Transverse colon (tissue), 4 donors: ENCODE measurements at regions of chr15 and their contacts with region 1.

Region 1: DNA sequence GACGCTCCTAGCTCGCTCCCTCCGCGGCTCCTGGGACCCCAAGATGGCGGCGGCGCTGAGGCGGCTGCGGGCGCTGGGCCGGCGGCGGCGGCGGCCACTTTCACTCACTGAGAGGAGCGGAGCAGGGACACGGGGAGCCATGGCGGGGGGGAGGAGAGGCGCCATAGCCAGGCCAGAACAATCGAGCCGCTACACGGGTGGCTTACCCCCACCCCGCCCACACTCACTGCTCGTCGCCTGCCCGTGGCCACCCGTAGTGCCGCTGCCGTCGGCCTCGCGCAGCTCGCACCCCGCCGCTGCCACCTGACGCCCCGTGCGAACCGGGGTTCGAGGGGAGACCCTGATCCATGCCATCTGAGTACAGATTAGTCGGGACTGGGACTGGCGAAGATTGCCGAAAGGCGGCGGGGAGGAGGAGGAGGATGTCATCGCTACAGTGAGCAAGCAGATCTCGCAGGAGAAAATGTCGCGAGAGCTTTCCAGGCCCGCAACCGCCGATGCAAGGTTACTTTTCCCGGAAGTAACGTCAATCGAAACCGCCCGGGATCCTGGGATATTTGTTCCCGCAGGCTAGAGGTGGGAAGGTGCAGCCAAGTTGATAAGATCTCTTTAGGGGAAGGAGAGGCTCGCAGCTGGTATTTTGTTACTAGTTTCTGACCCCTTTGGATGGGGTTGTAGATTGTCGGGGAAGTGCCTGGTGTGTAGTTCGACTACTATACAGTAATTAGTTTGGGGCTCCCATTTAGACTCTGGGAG is at the start of gene INO80:
- DNase-seq: peak; percentile 99
- H3K4me3 ChIP-seq: peak within 1 kb of the TSS; percentile 69 to 89 (median 89)
- H3K27ac ChIP-seq: peak within 1 kb of the TSS; percentile 96 to 99 (median 98)
- H3K4me1 ChIP-seq: peaks cover 4 to 19% (median 8%) of the 10 kb centered on the region in 4 donors
- H3K27me3 ChIP-seq: no peaks in the 10 kb centered on the region
- CTCF ChIP-seq: peak in 2 of 5 experiments; percentile 17 to 24
- EP300 ChIP-seq: no peak
- POLR2A ChIP-seq: peak; percentile 91
- total RNA-seq, gene INO80: 21.8 to 69.1 (median 29.8) TPM

Region 2: DNA sequence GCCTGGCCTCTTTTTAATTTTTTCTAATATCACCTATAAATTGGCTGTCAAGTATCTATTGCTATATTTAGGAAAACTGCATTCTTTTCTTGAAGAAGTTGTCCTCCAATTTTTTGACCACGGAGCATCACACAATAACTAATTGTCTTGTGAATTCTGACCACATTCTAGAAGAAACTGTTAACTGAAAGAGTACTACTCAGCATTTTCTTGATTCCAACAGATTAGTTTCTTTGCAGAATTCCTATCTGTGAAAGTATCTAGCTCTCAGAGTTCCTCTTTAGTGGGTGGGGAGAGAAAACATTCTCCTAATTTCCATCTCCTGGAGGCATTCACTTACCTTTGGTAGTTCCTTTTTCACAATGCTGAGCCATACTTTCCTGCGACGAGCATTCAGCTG is 31.3 kb before region 1 on chr15:
- in situ Hi-C with region 1: no loop called
- intact Hi-C with region 1: no loop called
- DNase-seq: no peak
- H3K4me3 ChIP-seq: no peak overlapping the region
- H3K27ac ChIP-seq: no peak overlapping the region
- H3K4me1 ChIP-seq: no peaks in the 10 kb centered on the region
- H3K27me3 ChIP-seq: no peaks in the 10 kb centered on the region
- CTCF ChIP-seq: no peak
- EP300 ChIP-seq: no peak
- POLR2A ChIP-seq: no peak

Region 3: DNA sequence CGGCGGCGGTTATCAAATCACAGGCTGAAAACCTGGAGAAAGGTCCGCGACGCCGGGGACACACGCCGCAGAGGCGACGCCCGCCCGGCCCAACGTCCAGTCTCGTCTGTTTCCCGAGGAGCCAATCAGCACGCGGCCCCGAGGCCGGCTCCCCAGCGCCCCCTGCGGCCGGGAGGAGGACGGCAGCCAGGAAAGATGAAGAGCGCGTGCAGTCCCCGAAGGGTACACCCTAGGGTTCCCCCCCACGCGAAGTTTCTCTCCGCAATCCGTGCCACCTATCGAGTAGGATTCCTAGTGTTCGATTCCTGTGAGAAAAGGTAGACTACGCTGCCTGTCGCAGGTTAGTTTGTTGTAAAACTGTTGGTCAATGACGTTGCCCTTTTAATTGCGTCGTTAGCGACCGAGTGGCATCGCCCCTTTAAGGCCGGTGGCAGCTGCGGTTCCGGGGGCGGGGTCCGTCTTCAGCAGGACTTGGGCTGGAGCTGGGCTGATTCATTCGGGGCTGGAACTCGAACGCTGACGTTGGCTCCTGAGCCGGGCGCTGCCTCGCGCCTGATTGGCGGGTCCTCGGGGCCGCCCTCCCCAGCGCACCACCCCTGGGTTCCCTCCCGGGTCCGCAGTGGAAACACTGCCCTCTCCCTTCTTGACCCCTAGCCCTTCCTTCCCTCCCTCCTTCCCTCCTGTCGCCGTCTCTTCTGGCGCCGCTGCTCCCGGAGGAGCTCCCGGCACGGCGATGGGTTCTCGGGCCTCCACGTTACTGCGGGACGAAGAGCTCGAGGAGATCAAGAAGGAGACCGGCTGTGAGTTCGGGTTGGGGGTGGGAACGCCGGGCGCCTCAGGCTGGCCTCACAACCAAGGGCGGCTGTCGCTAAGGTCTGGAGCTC is 114.6 kb after region 1 on chr15 and contains the starts of genes CHP1 and EXD1:
- in situ Hi-C with region 1: no loop called
- intact Hi-C with region 1: loop called (anchors 2 kb)
- DNase-seq: peak; percentile 99
- H3K4me3 ChIP-seq: peak within 1 kb of the TSS; percentile 79 to 99 (median 84)
- H3K27ac ChIP-seq: peak within 1 kb of the TSS; percentile 94 to 99 (median 96)
- H3K4me1 ChIP-seq: peaks cover 4 to 45% (median 18%) of the 10 kb centered on the region in 4 donors
- H3K27me3 ChIP-seq: no peaks in the 10 kb centered on the region
- CTCF ChIP-seq: peak; percentile 98 to 100 (median 99)
- EP300 ChIP-seq: no peak
- POLR2A ChIP-seq: peak; percentile 97
- total RNA-seq, gene CHP1: 321 to 818 (median 572) TPM
- total RNA-seq, gene EXD1: not detected

Region 4: DNA sequence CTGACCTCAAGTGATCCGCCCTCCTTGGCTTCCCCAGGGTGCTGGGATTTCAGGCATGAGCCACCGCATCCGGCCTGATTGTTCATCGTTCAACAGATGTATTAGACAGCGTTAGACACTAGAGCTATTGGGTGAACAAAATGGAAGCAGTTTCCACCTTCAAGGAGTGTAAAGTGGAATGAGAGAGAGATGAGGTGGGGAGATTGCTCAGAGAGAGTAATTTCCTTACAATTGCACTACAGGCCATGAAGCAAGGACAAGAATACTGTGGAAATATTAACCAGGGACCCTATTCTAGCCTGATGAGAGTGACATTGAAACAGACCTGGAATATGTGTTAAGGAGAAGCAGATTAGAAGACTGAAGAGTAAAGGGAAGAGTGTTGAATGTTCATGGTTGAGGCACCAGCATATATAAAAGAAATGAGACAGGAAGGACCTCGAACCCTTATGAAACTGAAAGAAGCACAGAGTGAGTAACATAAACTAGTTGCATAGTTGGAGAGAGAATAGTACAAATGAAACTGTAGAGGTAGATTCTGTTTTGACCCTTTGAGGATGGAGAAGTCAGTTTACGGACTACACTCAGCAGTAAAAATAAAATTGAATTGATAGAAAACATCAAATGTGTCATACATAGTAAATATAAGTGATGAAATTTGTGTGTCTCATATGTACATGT is 307.8 kb after region 1 on chr15:
- in situ Hi-C with region 1: no loop called
- intact Hi-C with region 1: loop called (anchors 5 kb)
- DNase-seq: no peak
- H3K4me3 ChIP-seq: no peak overlapping the region
- H3K27ac ChIP-seq: no peak overlapping the region
- H3K4me1 ChIP-seq: peaks cover 0 to 18% (median 8%) of the 10 kb centered on the region in 4 donors
- H3K27me3 ChIP-seq: no peaks in the 10 kb centered on the region
- CTCF ChIP-seq: no peak
- EP300 ChIP-seq: no peak
- POLR2A ChIP-seq: no peak